B cell (primary cell): ENCODE measurements at regions of chr1 and their contacts with region 1.

Region 1: DNA sequence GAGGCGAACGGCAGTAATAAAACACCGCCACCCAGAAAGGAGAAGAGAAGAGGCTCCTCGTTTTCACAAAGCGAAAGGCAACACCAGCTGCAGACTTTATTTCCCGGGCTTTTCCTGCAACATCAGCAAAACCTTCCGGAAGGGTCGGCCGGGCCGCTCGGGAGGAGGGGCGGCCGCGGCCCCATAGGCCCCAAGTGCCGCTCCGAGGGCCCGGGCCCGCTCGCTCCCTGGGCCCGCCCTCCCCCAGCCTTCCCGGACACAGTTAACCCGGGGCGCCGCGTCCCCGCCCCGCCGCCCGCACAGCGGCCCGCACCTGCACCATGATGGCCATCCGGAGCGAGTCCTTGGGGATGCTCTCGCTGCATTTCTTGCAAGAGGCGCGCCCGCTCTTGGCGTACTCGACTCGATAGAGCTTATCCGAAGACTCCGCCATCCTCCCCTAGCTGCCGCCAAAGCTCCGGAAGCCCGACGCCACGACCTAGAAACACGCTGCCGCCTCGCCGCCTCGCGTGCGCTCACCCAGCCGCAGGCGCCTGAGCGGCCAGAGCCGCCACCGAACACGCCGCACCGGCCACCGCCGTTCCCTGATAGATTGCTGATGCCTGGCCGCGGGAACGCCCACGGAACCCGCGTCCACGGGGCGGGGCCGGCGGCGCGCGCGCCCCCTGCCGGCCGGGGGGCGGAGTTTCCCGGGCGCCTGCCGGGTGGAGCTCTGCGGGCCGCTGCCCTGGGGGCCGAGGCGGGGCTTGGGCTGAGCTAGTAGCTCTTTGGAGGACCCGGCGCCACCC is at the start of gene PARP1:
- DNase-seq: peak; percentile 94
- ATAC-seq: peak; percentile 83
- H3K4me3 ChIP-seq: peak within 1 kb of the TSS; percentile 81 to 95 (median 83)
- H3K4me3 Mint-ChIP-seq: peak within 1 kb of the TSS; percentile 91
- H3K27ac ChIP-seq: peak within 1 kb of the TSS; percentile 78 to 88
- H3K27ac Mint-ChIP-seq: peak within 1 kb of the TSS; percentile 93
- H3K4me1 ChIP-seq: peaks cover 45 to 46% of the 10 kb centered on the region in 2 donors
- H3K4me1 Mint-ChIP-seq: peaks cover 43% of the 10 kb centered on the region
- H3K27me3 ChIP-seq: no peaks in the 10 kb centered on the region
- H3K27me3 Mint-ChIP-seq: no peaks in the 10 kb centered on the region
- CTCF ChIP-seq: peak; percentile 88
- total RNA-seq, gene PARP1: 180 and 187 TPM in 2 replicates

Region 2: DNA sequence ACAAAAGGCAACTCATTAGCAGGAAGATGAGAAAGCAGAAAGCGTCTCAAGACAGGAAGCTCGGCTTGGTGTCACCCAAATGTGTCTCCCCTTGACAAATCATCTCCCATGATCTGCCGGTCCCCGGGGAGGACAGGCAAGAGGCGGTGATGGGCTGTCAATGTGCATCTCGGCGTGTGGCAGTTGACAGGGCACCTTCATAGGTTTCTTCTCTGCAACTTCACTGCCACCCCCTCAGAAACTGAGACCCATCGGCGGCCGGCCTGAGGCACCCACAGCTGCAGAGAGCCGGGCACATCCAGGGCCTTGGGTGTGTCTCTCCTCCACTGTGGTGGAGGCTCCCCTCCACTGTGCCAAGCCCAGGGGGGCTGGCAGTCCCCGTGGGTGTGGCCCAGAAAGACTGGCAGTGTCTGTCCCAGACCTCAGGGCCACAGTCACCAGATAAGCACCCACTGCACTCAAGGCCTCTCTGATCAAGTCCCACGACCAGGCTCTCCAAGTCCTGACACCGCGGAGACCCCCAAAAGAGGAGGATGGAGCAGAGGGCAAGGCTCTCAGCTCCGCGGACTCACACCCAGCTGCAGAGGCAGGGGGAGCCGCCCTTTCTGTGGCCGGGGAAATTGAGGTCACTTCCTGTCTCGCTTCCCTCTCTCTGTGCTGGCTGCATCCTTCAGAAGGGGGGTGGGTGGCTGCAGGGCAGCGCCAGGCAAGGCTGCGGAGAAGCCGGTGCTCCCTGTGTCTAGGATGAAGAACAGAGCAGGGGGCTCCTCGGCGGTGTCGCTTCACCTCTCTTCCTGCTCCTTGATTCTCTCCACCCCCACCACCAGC is 940.3 kb before region 1 on chr1:
- CTCF ChIA-PET with region 1: no interaction called
- POLR2A ChIA-PET with region 1: no interaction called
- intact Hi-C with region 1: loop called (anchors 5 kb)
- DNase-seq: peak; percentile 92
- ATAC-seq: peak; percentile 88
- H3K4me3 ChIP-seq: peak overlapping the region; percentile 68 to 83 (median 73)
- H3K4me3 Mint-ChIP-seq: peak overlapping the region; percentile 91
- H3K27ac ChIP-seq: peak overlapping the region; percentile 82 to 97
- H3K27ac Mint-ChIP-seq: peak overlapping the region; percentile 97
- H3K4me1 ChIP-seq: peaks cover 15 to 34% of the 10 kb centered on the region in 2 donors
- H3K4me1 Mint-ChIP-seq: peaks cover 37% of the 10 kb centered on the region
- H3K27me3 ChIP-seq: no peaks in the 10 kb centered on the region
- H3K27me3 Mint-ChIP-seq: no peaks in the 10 kb centered on the region
- CTCF ChIP-seq: no peak

Region 3: DNA sequence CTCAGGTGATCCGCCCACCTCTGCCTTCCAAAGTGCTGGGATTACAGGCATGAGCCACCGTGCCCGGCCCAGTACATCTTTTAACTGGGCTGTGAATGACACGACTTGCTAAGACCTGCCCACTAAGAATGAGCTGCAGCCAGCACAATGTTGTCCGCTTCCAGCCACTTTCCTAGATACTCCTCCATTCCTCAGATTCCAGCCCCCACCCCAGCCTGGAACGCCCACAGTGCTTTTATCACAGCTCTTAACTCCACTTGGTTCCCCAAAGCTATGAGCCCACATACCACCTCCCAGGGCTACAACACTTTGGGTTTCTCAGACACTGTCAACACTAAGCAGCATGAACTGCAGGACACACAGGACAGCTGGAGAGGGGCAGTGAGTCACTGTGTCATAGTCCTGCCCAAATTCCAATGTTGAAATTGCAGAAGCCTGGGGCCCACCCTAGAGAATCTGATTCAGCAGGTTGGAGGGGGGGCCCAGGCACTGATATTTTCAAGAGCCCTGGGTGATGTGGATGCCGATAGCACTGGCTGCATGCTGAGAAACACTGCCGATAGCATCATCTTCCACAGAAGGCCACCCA is 279.1 kb before region 1 on chr1:
- CTCF ChIA-PET with region 1: interaction called, 24 read pairs
- POLR2A ChIA-PET with region 1: interaction called, 8 read pairs
- intact Hi-C with region 1: loop called (anchors 2 kb)
- DNase-seq: no peak
- ATAC-seq: no peak
- H3K4me3 ChIP-seq: no peak overlapping the region
- H3K4me3 Mint-ChIP-seq: peak overlapping the region; percentile 90
- H3K27ac ChIP-seq: peak overlapping the region; percentile 94 to 97
- H3K27ac Mint-ChIP-seq: peak overlapping the region; percentile 100
- H3K4me1 ChIP-seq: peaks cover 96 to 100% of the 10 kb centered on the region in 2 donors
- H3K4me1 Mint-ChIP-seq: peaks cover 92% of the 10 kb centered on the region
- H3K27me3 ChIP-seq: no peaks in the 10 kb centered on the region
- H3K27me3 Mint-ChIP-seq: no peaks in the 10 kb centered on the region
- CTCF ChIP-seq: no peak

Region 4: GRCh38 chr1:226148121-226148648 is 259.5 kb before region 1 on chr1:
- CTCF ChIA-PET with region 1: no interaction called
- POLR2A ChIA-PET with region 1: no interaction called
- intact Hi-C with region 1: no loop called
- DNase-seq: no peak
- ATAC-seq: no peak
- H3K4me3 ChIP-seq: no peak overlapping the region
- H3K4me3 Mint-ChIP-seq: no peak overlapping the region
- H3K27ac ChIP-seq: peak overlapping the region in 1 of 2 donors; percentile 52
- H3K27ac Mint-ChIP-seq: peak overlapping the region; percentile 79
- H3K4me1 ChIP-seq: peaks cover 6 to 15% of the 10 kb centered on the region in 2 donors
- H3K4me1 Mint-ChIP-seq: peaks cover 35% of the 10 kb centered on the region
- H3K27me3 ChIP-seq: no peaks in the 10 kb centered on the region
- H3K27me3 Mint-ChIP-seq: no peaks in the 10 kb centered on the region
- CTCF ChIP-seq: no peak

Region 5: GRCh38 chr1:226308723-226309315 is 98.9 kb before region 1 on chr1 and contains the start of gene LIN9:
- CTCF ChIA-PET with region 1: interaction called, 3 read pairs
- POLR2A ChIA-PET with region 1: no interaction called
- intact Hi-C with region 1: loop called (anchors 1 kb)
- DNase-seq: peak; percentile 93
- ATAC-seq: peak; percentile 91
- H3K4me3 ChIP-seq: peak within 1 kb of the TSS; percentile 40 to 99 (median 96)
- H3K4me3 Mint-ChIP-seq: peak within 1 kb of the TSS; percentile 95
- H3K27ac ChIP-seq: peak within 1 kb of the TSS; percentile 25 to 81
- H3K27ac Mint-ChIP-seq: peak within 1 kb of the TSS; percentile 90
- H3K4me1 ChIP-seq: peaks cover 12 to 14% of the 10 kb centered on the region in 2 donors
- H3K4me1 Mint-ChIP-seq: peaks cover 21% of the 10 kb centered on the region
- H3K27me3 ChIP-seq: peaks cover 0 to 14% (median 2%) of the 10 kb centered on the region in 4 experiments
- H3K27me3 Mint-ChIP-seq: peaks cover 5% of the 10 kb centered on the region
- CTCF ChIP-seq: no peak
- total RNA-seq, gene LIN9: 6.4 and 6.7 TPM in 2 replicates

Region 6: DNA sequence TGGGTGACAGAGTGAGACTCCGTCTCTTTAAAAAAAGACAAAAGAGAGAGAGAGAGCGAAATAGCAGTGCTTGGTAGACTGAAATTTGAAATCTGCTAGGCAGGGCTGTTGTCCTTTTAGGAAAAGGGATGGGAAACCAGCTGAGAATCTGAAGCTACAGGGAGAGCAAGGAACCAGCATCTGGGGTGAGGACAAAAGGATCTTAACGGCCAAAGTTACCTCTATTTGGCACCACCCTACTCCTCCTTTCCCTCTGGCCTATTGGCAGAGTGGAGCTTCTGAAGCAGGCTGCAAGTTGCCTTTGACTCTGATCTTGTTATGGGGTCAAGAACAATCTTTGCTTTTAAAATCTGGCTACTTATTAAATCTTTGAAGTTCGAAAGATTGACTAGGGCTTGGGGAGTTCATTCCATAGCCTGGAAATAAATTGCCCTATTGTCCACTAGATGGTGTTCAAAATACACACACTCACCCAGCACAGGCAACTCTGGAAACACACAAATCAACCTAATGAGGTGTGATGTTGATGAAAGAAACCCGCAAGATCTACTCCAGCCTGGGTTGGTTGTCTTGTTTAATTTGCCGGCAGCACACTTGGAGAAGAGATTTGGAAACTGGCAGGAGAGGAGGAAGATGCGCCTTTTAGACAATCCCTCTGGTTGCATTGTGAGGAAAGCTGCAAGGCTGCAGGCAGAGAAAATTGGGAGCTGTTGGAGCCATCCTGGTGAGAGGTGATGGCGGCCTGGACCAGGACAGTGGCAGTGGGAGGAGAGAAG is 16.7 kb after region 1 on chr1:
- CTCF ChIA-PET with region 1: interaction called, 12 read pairs
- POLR2A ChIA-PET with region 1: interaction called, 5 read pairs
- intact Hi-C with region 1: no loop called
- DNase-seq: peak; percentile 57
- ATAC-seq: peak; percentile 64
- H3K4me3 ChIP-seq: no peak overlapping the region
- H3K4me3 Mint-ChIP-seq: no peak overlapping the region
- H3K27ac ChIP-seq: no peak overlapping the region
- H3K27ac Mint-ChIP-seq: no peak overlapping the region
- H3K4me1 ChIP-seq: peaks cover 7 to 15% of the 10 kb centered on the region in 2 donors
- H3K4me1 Mint-ChIP-seq: peaks cover 20% of the 10 kb centered on the region
- H3K27me3 ChIP-seq: no peaks in the 10 kb centered on the region
- H3K27me3 Mint-ChIP-seq: no peaks in the 10 kb centered on the region
- CTCF ChIP-seq: peak; percentile 60

Region 7: GRCh38 chr1:226547754-226548191 is 140.1 kb after region 1 on chr1:
- CTCF ChIA-PET with region 1: interaction called, 33 read pairs
- POLR2A ChIA-PET with region 1: interaction called, 6 read pairs
- intact Hi-C with region 1: loop called (anchors 5 kb)
- DNase-seq: peak; percentile 83
- ATAC-seq: peak; percentile 80
- H3K4me3 ChIP-seq: peak overlapping the region in 3 of 5 experiments; percentile 34 to 51 (median 35)
- H3K4me3 Mint-ChIP-seq: peak overlapping the region; percentile 59
- H3K27ac ChIP-seq: no peak overlapping the region
- H3K27ac Mint-ChIP-seq: no peak overlapping the region
- H3K4me1 ChIP-seq: peaks cover 22 to 24% of the 10 kb centered on the region in 2 donors
- H3K4me1 Mint-ChIP-seq: peaks cover 21% of the 10 kb centered on the region
- H3K27me3 ChIP-seq: peaks cover 0 to 33% (median 4%) of the 10 kb centered on the region in 4 experiments
- H3K27me3 Mint-ChIP-seq: peaks cover 17% of the 10 kb centered on the region
- CTCF ChIP-seq: peak; percentile 88

Region 8: DNA sequence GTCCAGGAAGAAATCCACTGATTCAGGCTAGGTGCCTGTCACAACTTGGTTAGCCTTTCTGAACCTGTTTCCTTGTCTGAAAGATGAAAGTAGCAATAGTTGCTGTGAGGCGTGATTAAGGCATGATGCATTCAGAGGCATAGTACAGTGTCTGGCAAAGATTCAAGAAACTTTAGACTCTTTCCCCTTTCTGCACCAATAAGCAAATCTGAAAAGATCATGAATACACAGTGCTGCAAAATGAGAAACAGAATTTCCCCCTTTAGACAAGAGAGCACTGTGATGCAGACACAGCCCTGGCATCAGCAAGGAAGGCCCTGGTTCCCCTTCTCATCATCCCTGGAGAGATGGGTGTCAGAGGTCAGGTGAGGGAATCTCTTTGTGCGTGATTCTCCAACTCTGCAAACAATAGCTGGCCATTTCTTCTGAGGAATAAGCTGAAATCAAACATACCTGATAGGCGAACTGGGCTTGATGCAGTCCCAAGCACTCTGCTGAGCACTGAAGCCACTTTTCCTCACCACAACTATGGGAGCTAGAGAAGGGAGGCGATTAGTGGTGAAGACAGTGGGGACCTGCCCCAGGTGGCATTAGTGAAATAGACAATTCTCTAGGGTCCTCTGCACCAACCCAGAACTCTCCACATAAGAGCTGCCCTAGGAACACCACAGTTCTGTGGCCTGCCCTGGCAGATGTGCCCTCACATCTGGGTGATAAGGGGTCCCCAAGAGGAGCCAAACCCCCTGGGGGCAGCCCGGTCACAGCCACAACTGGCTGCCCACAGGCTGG is 289.7 kb after region 1 on chr1:
- CTCF ChIA-PET with region 1: no interaction called
- POLR2A ChIA-PET with region 1: no interaction called
- intact Hi-C with region 1: loop called (anchors 5 kb)
- DNase-seq: peak; percentile 88
- ATAC-seq: peak; percentile 83
- H3K4me3 ChIP-seq: peak overlapping the region in 1 of 5 experiments; percentile 4
- H3K4me3 Mint-ChIP-seq: peak overlapping the region; percentile 75
- H3K27ac ChIP-seq: peak overlapping the region; percentile 93 to 94
- H3K27ac Mint-ChIP-seq: peak overlapping the region; percentile 95
- H3K4me1 ChIP-seq: peaks cover 86 to 93% of the 10 kb centered on the region in 2 donors
- H3K4me1 Mint-ChIP-seq: peaks cover 89% of the 10 kb centered on the region
- H3K27me3 ChIP-seq: no peaks in the 10 kb centered on the region
- H3K27me3 Mint-ChIP-seq: no peaks in the 10 kb centered on the region
- CTCF ChIP-seq: no peak